Activated CD8-positive, alpha-beta memory T cell treated with anti-CD3 and anti-CD28 coated beads, Interleukin-2, amount 10 ng/mL, durations not matched to agents 7 days and 5 days (primary cell): ENCODE measurements at regions of chr20 and their contacts with region 1.

Region 1: DNA sequence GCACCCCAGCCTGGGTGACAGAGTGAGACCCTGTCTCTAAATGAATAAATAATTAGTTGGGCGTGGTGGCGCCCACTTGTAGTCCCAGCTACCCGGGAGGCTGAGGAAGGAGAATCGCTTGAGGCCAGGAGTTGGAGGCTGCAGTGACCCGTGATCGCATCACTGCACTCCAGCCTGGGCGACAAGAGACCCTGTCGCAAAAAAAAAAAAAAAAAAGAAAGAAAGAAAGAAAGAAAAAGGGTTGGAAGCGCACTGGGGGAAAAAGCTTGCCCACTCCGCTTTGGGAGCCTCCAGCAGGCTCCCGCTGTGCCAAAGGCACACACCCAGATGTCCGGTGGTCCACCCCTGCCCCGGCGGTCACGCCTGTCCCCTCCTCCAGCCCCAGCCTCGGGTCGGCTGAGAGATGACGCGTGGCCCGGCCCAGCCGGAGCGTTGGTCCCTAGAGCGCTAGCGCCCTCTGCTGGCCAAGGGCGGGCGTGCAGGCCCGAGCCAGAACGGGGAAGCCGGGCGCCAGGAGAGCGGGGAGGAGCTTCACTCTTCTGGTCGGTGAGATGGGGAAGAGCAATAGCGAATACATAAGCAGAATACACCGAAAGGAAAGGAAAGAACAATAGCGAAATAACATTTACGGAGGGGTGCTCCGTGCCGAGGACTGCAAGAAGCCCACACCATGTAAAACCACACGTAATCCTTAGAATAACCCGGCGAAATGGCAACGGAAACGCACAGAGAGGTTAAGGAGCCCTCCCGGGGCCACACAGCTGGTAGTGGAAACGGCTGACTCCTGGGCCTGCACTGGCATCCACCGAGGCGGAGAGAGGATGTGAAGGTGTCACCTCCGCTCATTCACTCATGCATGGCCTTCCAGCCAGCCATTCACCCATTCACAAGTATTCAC is 41.7 kb downstream of the UBE2V1 start:
- DNase-seq: peak; percentile 91
- ATAC-seq: peak; percentile 99
- H3K4me3 Mint-ChIP-seq: peak overlapping the region; percentile 59
- H3K27ac Mint-ChIP-seq: no peak overlapping the region
- H3K4me1 Mint-ChIP-seq: peaks cover 4% of the 10 kb centered on the region
- H3K27me3 Mint-ChIP-seq: peaks cover 4% of the 10 kb centered on the region

Region 2: GRCh38 chr20:49982346-49983122 is 88.7 kb before region 1 on chr20 and contains the start of gene SNAI1:
- CTCF ChIA-PET with region 1: interaction called, 481 read pairs
- DNase-seq: peak; percentile 85
- ATAC-seq: peak; percentile 91
- H3K4me3 Mint-ChIP-seq: peak within 1 kb of the TSS; percentile 41
- H3K27ac Mint-ChIP-seq: no peak within 1 kb of the TSS
- H3K4me1 Mint-ChIP-seq: peaks cover 18% of the 10 kb centered on the region
- H3K27me3 Mint-ChIP-seq: peaks cover 26% of the 10 kb centered on the region
- total RNA-seq, gene SNAI1: 0.21 to 0.61 TPM

Region 3: DNA sequence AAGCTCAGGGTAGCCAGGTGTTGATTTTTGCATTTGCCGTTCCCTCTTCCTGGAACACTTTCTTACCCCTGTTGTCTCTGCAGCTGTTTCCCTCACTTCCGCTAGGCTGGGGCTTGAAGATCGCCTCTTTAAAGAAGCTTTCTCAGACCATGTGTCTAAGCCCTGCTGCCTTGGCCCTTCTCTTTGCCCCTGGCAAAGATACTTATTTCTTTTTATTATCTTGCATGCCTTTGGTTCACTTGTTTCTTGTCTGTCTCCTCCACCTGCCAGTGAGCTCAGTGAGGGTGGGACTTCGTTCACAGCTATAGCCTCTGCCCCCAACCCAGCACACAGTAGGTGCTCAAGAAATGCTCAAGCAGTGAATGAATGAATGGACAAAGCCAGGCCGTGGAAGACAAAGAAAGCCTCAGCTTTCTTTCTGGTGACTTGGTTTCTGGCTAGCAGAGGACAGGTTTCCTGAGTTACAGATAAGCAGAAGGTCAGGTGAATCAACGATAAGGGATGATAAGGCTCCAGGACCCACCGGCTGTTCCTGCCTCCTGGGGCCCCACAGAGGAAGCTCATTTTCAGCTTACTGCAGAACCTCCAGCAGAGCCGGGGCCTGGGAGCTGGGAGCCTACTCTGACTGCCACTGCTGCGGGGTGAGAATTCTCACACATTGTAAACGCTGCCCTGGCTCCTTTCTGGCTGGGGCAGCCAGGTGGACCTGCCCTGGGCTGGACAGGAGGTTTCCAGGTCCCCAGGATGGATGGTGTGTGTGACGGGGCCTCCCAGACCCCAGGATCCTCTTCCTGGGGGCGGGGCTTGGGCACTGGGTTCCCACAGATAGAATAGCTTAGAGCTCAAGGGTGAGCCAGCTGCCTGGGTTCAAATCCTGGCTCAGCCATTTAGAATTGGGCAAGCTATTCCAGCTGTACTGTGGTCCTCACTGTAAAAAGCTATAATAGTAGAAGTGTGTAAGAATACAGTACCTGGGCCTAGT is 58.7 kb before region 1 on chr20:
- CTCF ChIA-PET with region 1: interaction called, 15 read pairs
- DNase-seq: no peak
- ATAC-seq: no peak
- H3K4me3 Mint-ChIP-seq: no peak overlapping the region
- H3K27ac Mint-ChIP-seq: no peak overlapping the region
- H3K4me1 Mint-ChIP-seq: peaks cover 6% of the 10 kb centered on the region
- H3K27me3 Mint-ChIP-seq: peaks cover 22% of the 10 kb centered on the region

Region 4: DNA sequence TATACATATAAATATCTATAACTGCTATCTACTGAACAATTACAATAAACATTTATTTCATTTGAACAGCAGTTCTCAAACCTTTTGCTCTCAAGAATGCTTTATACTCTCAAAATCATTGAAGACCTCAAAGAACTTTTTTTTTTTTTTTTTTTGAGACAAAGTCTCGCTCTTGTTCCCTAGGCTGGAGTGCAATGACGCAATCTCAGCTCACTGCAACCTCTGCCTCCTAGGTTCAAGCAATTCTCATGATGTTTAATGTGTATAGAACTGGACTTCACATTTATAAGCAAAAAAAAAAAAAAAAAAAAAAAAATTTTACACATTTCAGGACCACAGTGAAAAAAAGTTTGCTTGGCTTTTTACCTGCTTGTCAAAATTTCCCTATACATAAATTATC is 30.0 kb after region 1 on chr20:
- CTCF ChIA-PET with region 1: interaction called, 12 read pairs
- DNase-seq: no peak
- ATAC-seq: no peak
- H3K4me3 Mint-ChIP-seq: no peak overlapping the region
- H3K27ac Mint-ChIP-seq: no peak overlapping the region
- H3K4me1 Mint-ChIP-seq: peaks cover 41% of the 10 kb centered on the region
- H3K27me3 Mint-ChIP-seq: no peaks in the 10 kb centered on the region

Region 5: GRCh38 chr20:50153485-50154377 is 82.5 kb after region 1 on chr20 and contains the start of gene PEDS1:
- CTCF ChIA-PET with region 1: interaction called, 17 read pairs
- DNase-seq: peak; percentile 90
- ATAC-seq: peak; percentile 98
- H3K4me3 Mint-ChIP-seq: peak within 1 kb of the TSS; percentile 89
- H3K27ac Mint-ChIP-seq: peak within 1 kb of the TSS; percentile 88
- H3K4me1 Mint-ChIP-seq: peaks cover 37% of the 10 kb centered on the region
- H3K27me3 Mint-ChIP-seq: no peaks in the 10 kb centered on the region
- total RNA-seq, gene PEDS1: 24.2 to 25.4 TPM